Posterior vena cava (tissue), 2 donors: ENCODE measurements at regions of chr7 and their contacts with region 1.

Region 1: GRCh38 chr7:108985037-108985436 is 415.4 kb downstream of the DNAJB9 start:
- DNase-seq: no peak

Region 2: GRCh38 chr7:108063520-108063933 is 921.5 kb before region 1 on chr7:
- intact Hi-C with region 1: loop called in 1 of 2 experiments (anchors 5 kb)
- DNase-seq: no peak